ENCODE measurements at regions of chr5 and their contacts with region 1.

Region 1: DNA sequence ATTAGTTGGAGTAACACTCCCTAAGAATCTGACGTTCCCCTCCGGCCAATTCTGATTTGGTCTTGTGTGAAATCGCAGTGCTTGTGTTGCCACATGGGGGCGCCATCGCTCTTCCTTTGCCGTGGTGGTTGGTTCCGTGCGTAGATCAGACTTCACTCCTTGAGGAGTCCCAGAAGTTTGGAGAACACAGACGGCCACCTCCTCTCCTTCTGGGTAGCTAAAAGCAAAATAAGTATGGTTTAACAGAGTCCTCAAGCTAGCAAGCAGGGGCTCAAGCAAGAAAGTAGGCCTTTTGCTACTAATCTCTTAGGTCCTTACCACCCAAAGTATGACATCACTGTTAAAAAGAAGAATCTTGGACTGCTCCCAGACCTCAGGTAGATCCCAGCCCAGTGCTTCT is 59.5 kb downstream of the HSPA4 start:
- DNase-seq: peak; percentile 81 to 93 (median 89)
- H3K4me3 ChIP-seq: no peak overlapping the region
- H3K27ac ChIP-seq: no peak overlapping the region
- H3K4me1 ChIP-seq: peaks cover 0 to 14% of the 10 kb centered on the region in 2 donors
- H3K27me3 ChIP-seq: no peaks in the 10 kb centered on the region
- CTCF ChIP-seq: peak; percentile 85 to 93 (median 90)
- POLR2A ChIP-seq: no peak

Region 2: GRCh38 chr5:132979367-132979940 is 131.8 kb before region 1 on chr5:
- intact Hi-C with region 1: no loop called
- DNase-seq: no peak
- H3K4me3 ChIP-seq: no peak overlapping the region
- H3K27ac ChIP-seq: no peak overlapping the region
- H3K4me1 ChIP-seq: no peaks in the 10 kb centered on the region
- H3K27me3 ChIP-seq: no peaks in the 10 kb centered on the region
- CTCF ChIP-seq: no peak
- POLR2A ChIP-seq: no peak

Region 3: DNA sequence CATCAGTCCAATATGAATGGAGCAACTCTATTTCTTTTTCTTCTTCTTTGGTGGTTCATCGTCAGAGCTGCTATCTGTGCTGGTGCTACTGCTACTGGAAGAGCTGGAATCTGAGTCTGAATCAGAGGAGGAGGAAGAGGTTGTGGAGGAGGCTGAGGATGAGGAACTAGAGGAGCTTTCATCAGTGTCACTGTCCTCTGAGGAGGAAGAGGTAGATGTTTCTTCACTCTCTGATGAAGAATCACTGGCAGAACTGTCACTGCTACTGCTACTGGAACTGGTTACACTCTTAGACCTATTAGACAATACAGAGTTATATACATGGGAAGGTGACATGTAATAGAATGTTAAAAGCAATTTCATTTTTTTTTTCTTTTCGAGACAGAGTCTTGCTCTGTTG is 112.7 kb before region 1 on chr5:
- intact Hi-C with region 1: no loop called
- DNase-seq: no peak
- H3K4me3 ChIP-seq: no peak overlapping the region
- H3K27ac ChIP-seq: no peak overlapping the region
- H3K4me1 ChIP-seq: no peaks in the 10 kb centered on the region
- H3K27me3 ChIP-seq: no peaks in the 10 kb centered on the region
- CTCF ChIP-seq: no peak
- POLR2A ChIP-seq: no peak

Region 4: DNA sequence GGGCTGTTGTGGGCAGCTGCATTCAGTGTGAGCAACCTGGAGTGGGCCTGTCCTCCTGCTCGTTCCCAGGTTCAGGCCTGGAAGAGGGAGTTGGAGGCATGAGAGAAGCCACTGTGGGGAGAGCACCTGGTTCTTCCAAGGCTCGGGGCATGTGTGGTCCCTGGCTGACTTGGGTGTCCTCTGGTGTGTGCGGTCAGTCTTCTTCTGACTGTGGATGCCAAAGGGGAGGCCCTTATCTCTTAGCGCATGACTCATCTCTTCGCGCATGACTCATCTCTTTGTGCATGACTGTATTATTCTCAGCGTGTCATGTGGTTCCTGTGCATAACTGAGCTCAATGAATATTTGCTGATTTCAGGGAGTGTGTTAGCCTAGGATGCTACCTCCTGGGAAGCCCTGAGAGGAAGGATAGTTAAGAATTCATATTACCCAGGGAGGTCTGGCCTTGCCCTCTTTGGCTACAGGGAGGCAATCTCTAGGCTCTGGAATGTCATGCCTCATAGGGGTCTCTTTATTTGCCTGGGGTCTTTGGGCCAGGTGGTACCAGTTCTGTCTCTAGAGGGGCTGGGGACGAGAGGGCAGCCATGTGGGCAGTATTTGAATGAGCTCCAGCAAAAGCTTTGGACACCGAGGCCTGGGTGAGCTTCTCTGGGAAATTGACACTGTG is 129.3 kb after region 1 on chr5:
- intact Hi-C with region 1: loop called (anchors 5 to 10 kb)
- DNase-seq: peak; percentile 77 to 94 (median 91)
- H3K4me3 ChIP-seq: no peak overlapping the region
- H3K27ac ChIP-seq: peak overlapping the region in 1 of 5 donors; percentile 37
- H3K4me1 ChIP-seq: no peaks in the 10 kb centered on the region
- H3K27me3 ChIP-seq: no peaks in the 10 kb centered on the region
- CTCF ChIP-seq: no peak
- POLR2A ChIP-seq: peak in 1 of 2 donors; percentile 60

Region 5: GRCh38 chr5:133247881-133248624 is 136.8 kb after region 1 on chr5:
- intact Hi-C with region 1: loop called (anchors 5 to 10 kb)
- DNase-seq: peak; percentile 32 to 76 (median 67)
- H3K4me3 ChIP-seq: no peak overlapping the region
- H3K27ac ChIP-seq: no peak overlapping the region
- H3K4me1 ChIP-seq: no peaks in the 10 kb centered on the region
- H3K27me3 ChIP-seq: no peaks in the 10 kb centered on the region
- CTCF ChIP-seq: peak; percentile 34 to 65 (median 54)
- POLR2A ChIP-seq: no peak

Region 6: GRCh38 chr5:133287500-133287899 is 176.2 kb after region 1 on chr5:
- intact Hi-C with region 1: loop called in 1 of 2 experiments (anchors 5 kb)
- DNase-seq: peak in 5 of 7 donors; percentile 17 to 66 (median 31)
- H3K4me3 ChIP-seq: no peak overlapping the region
- H3K27ac ChIP-seq: no peak overlapping the region
- H3K4me1 ChIP-seq: no peaks in the 10 kb centered on the region
- H3K27me3 ChIP-seq: no peaks in the 10 kb centered on the region
- CTCF ChIP-seq: peak in 5 of 6 experiments; percentile 5 to 51 (median 38)
- POLR2A ChIP-seq: no peak

Region 7: GRCh38 chr5:133868946-133869518 is 757.7 kb after region 1 on chr5:
- intact Hi-C with region 1: loop called in 1 of 2 experiments (anchors 10 kb)
- DNase-seq: peak; percentile 60 to 90 (median 85)
- H3K4me3 ChIP-seq: peak overlapping the region in 1 of 4 donors; percentile 1
- H3K27ac ChIP-seq: no peak overlapping the region
- H3K4me1 ChIP-seq: peaks cover 0 to 8% of the 10 kb centered on the region in 2 donors
- H3K27me3 ChIP-seq: no peaks in the 10 kb centered on the region
- CTCF ChIP-seq: peak; percentile 69 to 88 (median 74)
- POLR2A ChIP-seq: no peak

Region 8: DNA sequence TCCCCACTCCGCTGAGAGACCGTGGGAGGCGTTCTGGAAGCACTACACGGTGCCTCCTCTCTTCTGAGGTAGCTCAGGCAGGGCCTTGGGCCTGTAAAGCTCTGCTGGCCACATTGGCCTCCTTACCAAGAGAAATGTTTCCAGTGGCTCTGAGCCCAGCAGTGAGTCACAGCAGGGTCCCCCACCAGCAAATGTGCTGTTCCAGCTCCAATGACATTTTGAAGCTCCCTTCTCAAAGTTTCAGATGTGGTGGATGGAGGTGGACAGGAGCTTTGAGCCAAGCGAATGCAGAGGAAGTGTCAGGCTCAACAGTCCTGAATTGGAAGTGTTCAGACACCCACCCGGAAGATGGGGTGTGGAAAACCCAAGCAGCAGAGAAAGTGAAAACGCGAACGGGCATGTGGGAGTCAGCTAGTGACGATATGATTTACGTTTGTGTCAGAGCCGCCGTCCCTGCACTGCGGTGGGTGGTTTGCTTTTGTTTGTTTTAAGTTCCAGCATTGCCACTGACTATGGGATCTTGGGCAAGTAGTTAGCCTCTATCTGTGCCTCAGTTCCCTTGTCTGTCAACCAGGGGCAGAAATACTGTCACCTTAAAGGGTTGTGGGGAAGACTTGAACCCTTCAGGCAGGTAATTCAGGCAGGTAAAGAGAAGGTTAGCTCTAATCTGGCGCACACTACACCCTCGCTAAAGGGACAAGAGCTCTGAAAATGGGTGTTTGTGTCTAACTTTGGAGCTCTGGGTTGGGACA is 818.9 kb after region 1 on chr5:
- intact Hi-C with region 1: loop called in 1 of 2 experiments (anchors 10 kb)
- DNase-seq: peak; percentile 36 to 84 (median 64)
- H3K4me3 ChIP-seq: no peak overlapping the region
- H3K27ac ChIP-seq: peak overlapping the region in 1 of 5 donors; percentile 17
- H3K4me1 ChIP-seq: peaks cover 0 to 14% of the 10 kb centered on the region in 2 donors
- H3K27me3 ChIP-seq: no peaks in the 10 kb centered on the region
- CTCF ChIP-seq: no peak
- POLR2A ChIP-seq: no peak